PC-3 (cell line): ENCODE measurements at regions of chr2 and their contacts with region 1.

Region 1: DNA sequence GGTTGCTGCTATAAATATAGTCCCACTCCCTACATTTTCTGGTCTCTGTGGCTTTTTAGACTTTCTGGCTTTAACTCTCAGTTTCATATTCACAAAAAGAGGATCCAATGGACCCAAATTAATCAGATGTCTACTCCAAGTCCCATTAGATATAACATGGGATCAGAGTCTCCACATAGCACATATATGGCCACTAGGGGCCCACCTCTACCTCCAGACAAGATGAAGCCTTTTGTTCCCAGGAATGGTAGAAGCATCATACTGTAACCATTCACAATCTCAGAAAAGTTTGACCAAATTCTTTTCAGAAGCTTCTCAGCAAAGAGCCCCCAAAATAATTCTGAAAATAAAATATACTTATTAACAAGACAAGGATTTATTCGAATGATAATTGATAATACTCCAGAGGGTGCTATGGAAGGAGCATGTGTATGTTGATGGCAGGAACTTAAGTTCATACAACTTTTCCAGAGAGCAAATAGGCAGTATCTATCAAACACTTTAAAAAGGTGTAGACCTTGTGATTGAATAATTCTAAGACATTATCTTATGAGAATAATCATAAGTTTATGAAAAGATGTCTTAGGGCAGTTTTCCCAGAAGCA is 382.3 kb upstream of the CRIM1 start:
- DNase-seq: peak; percentile 38
- ATAC-seq: peak; percentile 74
- H3K4me3 ChIP-seq: no peak overlapping the region
- H3K27ac ChIP-seq: no peak overlapping the region
- H3K4me1 ChIP-seq: no peaks in the 10 kb centered on the region
- H3K27me3 ChIP-seq: peaks cover 10% of the 10 kb centered on the region; the same call in 1 of the 2 replicates
- CTCF ChIP-seq: peak; percentile 79

Region 2: DNA sequence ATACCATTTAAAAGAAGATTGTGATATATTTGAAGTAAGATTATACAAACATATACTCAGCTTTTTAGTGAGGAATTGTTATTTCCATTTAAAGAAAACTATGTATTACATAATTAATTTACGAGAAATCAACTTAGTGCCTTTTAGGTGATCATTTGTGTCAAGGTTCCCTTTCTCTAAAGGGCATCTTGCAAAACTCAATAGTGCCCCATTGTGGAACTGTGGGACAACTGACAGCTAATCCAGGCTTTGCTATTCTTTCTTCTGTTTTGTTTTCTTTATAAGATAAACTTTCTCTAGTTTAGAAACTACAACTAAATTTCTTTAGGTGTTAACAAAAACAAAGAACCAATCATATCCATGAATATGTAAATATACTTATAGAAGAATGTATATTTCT is 699.0 kb after region 1 on chr2:
- CTCF ChIA-PET with region 1: no interaction called
- POLR2A ChIA-PET with region 1: no interaction called
- intact Hi-C with region 1: loop called (anchors 10 kb)
- DNase-seq: peak; percentile 67
- ATAC-seq: peak; percentile 82
- H3K4me3 ChIP-seq: no peak overlapping the region
- H3K27ac ChIP-seq: no peak overlapping the region
- H3K4me1 ChIP-seq: peaks cover 3% of the 10 kb centered on the region; the same call in 1 of the 2 replicates
- H3K27me3 ChIP-seq: no peaks in the 10 kb centered on the region
- CTCF ChIP-seq: peak; percentile 86